Activated naive CD4-positive, alpha-beta T cell treated with anti-CD3 and anti-CD28 coated beads for 36 hours (primary cell): ENCODE measurements at regions of chr18 and their contacts with region 1.

Region 1: GRCh38 chr18:2641638-2642037 is 13.9 kb upstream of the SMCHD1 start:
- DNase-seq: no peak
- H3K4me3 Mint-ChIP-seq: peak overlapping the region; percentile 23
- H3K27ac Mint-ChIP-seq: peak overlapping the region; percentile 86
- H3K4me1 Mint-ChIP-seq: peaks cover 52% of the 10 kb centered on the region
- H3K27me3 Mint-ChIP-seq: no peaks in the 10 kb centered on the region

Region 2: DNA sequence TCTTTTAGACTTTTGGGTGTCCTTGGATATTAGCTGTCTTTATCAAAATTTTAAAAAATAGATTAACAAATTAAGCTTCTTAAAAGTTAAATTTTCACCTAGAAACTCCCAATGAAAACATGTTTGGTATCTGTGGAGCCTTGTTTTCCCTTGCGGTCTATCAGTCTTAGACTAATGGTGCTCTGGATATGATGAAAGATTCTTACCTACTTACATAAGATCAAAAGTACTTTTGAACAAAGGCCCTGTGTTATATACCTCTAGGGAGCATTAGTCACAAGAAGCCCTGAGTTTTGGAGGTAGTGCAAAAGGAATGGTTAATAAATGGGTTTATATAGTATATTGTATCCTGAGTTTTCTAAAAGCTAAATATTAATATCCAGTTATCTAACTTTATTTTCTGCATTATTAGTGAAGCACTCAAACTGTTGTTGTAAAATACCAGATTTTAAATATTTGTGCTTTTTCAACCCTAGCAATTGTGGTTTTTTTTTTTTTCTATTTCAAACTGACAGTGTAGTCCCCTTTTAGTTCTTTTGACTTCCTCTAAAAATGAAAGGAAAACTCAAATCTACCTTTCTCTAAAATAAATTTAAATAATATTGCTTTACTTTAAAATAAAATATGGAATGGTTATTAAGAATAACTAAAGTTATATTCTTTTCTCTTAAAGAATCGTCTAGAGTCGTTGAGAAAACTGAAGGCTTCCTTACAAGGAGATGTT is 52.1 kb before region 1 on chr18:
- CTCF ChIA-PET with region 1: interaction called, 3 read pairs
- intact Hi-C with region 1: loop called (anchors 1 kb)
- DNase-seq: no peak
- H3K4me3 Mint-ChIP-seq: peak overlapping the region; percentile 55
- H3K27ac Mint-ChIP-seq: peak overlapping the region; percentile 93
- H3K4me1 Mint-ChIP-seq: peaks cover 59% of the 10 kb centered on the region
- H3K27me3 Mint-ChIP-seq: no peaks in the 10 kb centered on the region

Region 3: DNA sequence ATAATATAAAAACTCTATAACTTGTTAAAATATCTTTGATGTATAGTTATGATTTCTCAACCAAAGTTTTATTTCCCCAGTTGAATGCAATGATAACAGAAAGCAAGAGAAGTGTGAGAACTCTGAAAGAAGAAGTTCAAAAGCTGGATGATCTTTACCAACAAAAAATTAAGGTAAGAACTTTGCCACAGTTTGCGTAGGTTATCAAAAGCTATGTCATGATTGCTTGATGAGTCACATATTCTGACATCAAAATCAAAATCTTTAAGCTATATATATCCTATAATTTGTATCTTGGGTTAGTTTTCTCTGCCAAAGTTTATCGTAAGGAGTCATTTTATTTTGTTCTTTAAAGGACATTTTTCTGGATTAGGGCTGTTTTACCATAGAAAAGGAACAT is 35.3 kb before region 1 on chr18:
- CTCF ChIA-PET with region 1: interaction called, 3 read pairs
- intact Hi-C with region 1: loop called (anchors 1 kb)
- DNase-seq: no peak
- H3K4me3 Mint-ChIP-seq: no peak overlapping the region
- H3K27ac Mint-ChIP-seq: peak overlapping the region; percentile 79
- H3K4me1 Mint-ChIP-seq: peaks cover 49% of the 10 kb centered on the region
- H3K27me3 Mint-ChIP-seq: no peaks in the 10 kb centered on the region

Region 4: DNA sequence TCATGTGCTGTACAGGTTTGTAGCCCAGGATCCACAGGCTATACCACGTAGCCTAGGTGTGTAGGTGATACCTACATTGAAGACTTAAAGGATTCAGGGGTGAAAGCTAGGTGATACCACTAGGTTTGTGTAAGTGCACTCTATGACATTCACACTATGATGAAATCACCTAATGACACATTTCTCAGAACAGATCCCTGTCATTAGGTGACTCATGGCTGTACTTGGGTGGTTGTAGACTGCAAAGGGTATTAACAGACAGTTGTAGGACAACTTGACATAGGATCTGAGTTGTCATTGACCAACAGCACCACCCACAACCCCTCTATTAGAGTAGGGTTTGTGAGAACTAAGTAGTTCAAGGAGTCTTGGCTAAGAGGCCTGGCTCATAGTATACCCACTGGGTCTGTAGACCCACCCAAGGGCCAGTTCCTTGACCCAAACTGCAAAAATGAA is 13.8 kb before region 1 on chr18:
- CTCF ChIA-PET with region 1: no interaction called
- intact Hi-C with region 1: loop called (anchors 1 kb)
- DNase-seq: peak; percentile 66
- H3K4me3 Mint-ChIP-seq: no peak overlapping the region
- H3K27ac Mint-ChIP-seq: peak overlapping the region; percentile 50
- H3K4me1 Mint-ChIP-seq: peaks cover 30% of the 10 kb centered on the region
- H3K27me3 Mint-ChIP-seq: no peaks in the 10 kb centered on the region

Region 5: GRCh38 chr18:2889761-2890192 is 248.1 kb after region 1 on chr18:
- CTCF ChIA-PET with region 1: no interaction called
- intact Hi-C with region 1: loop called (anchors 5 kb)
- DNase-seq: no peak
- H3K4me3 Mint-ChIP-seq: no peak overlapping the region
- H3K27ac Mint-ChIP-seq: no peak overlapping the region
- H3K4me1 Mint-ChIP-seq: peaks cover 31% of the 10 kb centered on the region
- H3K27me3 Mint-ChIP-seq: no peaks in the 10 kb centered on the region